ENCODE measurements at regions of chr6 and their contacts with region 1.

Region 1: GRCh38 chr6:29016559-29017427 is 11.7 kb upstream of the ZNF311 start:
- DNase-seq: peak; percentile 78 to 89
- ATAC-seq: peak; percentile 93
- H3K4me3 ChIP-seq: peak overlapping the region; percentile 7 to 64
- H3K27ac ChIP-seq: no peak overlapping the region
- H3K4me1 ChIP-seq: no peaks in the 10 kb centered on the region
- H3K27me3 ChIP-seq: no peaks in the 10 kb centered on the region

Region 2: GRCh38 chr6:28838634-28839442 is 178.0 kb before region 1 on chr6:
- intact Hi-C with region 1: loop called (anchors 1 to 5 kb)
- DNase-seq: peak; percentile 87 to 94
- ATAC-seq: peak; percentile 93
- H3K4me3 ChIP-seq: peak overlapping the region; percentile 54 to 61
- H3K27ac ChIP-seq: no peak overlapping the region
- H3K4me1 ChIP-seq: no peaks in the 10 kb centered on the region
- H3K27me3 ChIP-seq: no peaks in the 10 kb centered on the region

Region 3: GRCh38 chr6:28981833-28982475 is 34.8 kb before region 1 on chr6:
- intact Hi-C with region 1: no loop called
- DNase-seq: peak; percentile 85 to 90
- ATAC-seq: peak; percentile 94
- H3K4me3 ChIP-seq: peak overlapping the region; percentile 57 to 95
- H3K27ac ChIP-seq: no peak overlapping the region
- H3K4me1 ChIP-seq: peaks cover 0 to 2% of the 10 kb centered on the region in 2 donors
- H3K27me3 ChIP-seq: no peaks in the 10 kb centered on the region

Region 4: DNA sequence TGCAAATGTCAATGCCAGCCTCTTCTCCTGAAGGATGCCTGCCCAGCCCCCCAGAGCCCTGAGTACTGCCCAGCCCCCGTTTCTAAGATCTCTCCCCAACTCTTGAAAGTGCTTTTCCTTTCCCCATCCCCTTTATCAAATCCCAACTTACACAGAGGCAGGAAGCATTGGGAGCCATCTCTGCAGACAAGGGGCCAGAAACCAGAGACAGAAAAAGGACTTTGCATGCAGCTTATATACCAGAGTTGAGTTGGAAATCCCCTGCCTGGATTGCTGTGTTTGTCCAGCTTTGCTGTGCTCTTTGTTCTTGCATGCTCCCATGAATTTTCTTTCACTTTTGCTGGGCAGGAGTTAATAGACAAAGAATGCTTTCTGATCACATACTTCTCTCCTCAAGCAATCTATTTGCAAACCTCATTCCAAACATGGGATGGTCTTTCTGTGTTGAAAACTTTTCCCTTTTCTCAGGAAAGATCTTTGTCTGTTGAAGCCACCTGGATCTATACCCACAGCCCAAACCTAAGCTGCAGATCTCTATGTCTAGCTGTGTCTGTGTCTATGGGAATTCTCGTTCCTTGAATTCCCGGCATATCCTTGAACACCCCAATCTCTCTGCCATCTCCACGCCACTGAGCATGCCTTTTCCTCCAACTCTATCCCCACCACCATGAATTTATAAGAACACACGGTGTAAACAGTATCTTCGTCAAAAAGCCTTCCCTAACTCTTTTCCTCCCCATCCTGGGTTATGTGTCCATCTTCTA is 542.9 kb after region 1 on chr6 and contains the start of gene UBD:
- intact Hi-C with region 1: no loop called
- DNase-seq: no peak
- ATAC-seq: no peak
- H3K4me3 ChIP-seq: no peak within 1 kb of the TSS
- H3K27ac ChIP-seq: no peak within 1 kb of the TSS
- H3K4me1 ChIP-seq: no peaks in the 10 kb centered on the region
- H3K27me3 ChIP-seq: no peaks in the 10 kb centered on the region
- total RNA-seq, gene UBD: 0.32 to 4.4 TPM